Activated naive CD4-positive, alpha-beta T cell treated with anti-CD3 and anti-CD28 coated beads for 36 hours (primary cell): ENCODE measurements at regions of chr6 and their contacts with region 1.

Region 1: DNA sequence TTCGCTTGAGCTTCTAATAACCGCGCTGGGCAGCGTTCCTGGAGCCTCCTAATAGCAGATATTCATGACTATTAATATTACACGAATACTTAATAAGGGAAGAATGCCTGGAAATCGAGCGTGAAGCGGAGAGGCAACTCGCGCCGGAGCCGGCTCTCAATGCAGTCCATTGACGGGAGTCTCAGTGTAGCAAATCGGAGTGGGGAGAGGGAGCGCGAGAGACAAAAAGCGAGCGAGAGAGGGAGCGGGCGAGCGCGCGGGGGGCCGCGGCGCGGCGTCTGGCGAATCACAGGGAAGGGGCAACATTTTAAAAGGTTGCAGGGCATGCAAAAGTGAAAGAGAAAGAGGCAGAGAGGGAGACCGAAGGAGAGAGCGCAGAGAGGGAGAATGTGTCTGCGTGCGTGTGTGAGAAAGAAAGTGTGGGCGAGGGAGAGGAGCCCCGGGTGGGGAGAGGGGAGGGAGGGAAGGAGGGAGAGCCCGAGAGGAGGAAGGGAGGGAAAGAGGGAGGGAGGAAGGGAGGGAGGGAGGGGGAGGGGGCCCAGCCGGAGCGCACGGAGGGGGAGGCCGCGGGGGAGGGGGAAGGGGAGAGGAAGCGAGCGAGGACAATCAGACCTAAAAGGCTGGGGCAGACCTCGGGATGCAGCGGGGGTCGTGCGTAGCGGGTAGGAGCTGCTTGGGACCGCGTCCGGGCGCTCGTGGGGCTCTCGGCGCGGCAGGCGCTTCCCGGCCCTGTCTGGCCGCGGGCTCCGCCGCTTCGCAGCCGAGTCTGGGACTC is 2.7 kb downstream of the TFAP2A start:
- DNase-seq: peak; percentile 51
- H3K4me3 Mint-ChIP-seq: peak overlapping the region; percentile 83
- H3K27ac Mint-ChIP-seq: no peak overlapping the region
- H3K4me1 Mint-ChIP-seq: peaks cover 45% of the 10 kb centered on the region
- H3K27me3 Mint-ChIP-seq: peaks cover 85% of the 10 kb centered on the region

Region 2: DNA sequence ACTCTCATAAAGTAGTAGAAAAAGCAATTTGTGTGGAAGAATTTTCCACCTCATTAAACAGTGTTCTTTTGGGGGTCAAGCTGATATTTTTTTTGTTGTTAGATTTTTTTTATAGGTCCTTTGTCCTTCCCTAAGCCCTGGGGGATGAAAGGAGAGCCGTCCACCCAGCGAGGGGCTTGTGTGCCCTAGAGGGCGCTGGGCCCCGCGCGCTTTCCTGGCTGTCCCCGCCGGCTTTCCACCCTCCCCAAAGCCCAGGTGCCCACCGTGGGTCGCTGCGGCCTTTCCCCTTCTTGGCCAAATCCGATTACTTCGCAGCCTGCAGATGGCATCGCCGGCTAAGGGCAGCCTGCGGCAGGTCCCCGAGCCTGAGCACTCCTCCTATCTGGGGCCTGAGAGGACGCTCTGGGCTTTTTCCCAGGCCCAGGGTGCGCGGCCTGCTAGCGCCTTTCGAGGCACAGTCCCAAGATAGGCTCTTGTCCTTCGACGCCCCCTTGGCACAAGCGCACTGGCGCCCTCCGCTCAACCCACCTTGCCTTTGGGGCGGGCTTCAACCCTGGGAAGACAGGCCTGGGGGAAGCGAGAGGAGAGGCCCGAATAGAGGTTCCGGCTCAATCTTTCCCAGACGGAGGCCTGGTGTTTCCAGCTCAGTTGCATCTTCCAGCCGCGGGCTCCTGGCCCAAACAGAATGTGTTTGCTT is 30.9 kb before region 1 on chr6:
- CTCF ChIA-PET with region 1: interaction called, 4 read pairs
- intact Hi-C with region 1: loop called (anchors 2 kb)
- DNase-seq: peak; percentile 32
- H3K4me3 Mint-ChIP-seq: no peak overlapping the region
- H3K27ac Mint-ChIP-seq: no peak overlapping the region
- H3K4me1 Mint-ChIP-seq: peaks cover 18% of the 10 kb centered on the region
- H3K27me3 Mint-ChIP-seq: peaks cover 68% of the 10 kb centered on the region

Region 3: GRCh38 chr6:10424007-10424406 is 11.8 kb after region 1 on chr6:
- CTCF ChIA-PET with region 1: interaction called, 9 read pairs
- intact Hi-C with region 1: loop called (anchors 1 kb)
- DNase-seq: no peak
- H3K4me3 Mint-ChIP-seq: no peak overlapping the region
- H3K27ac Mint-ChIP-seq: no peak overlapping the region
- H3K4me1 Mint-ChIP-seq: peaks cover 15% of the 10 kb centered on the region
- H3K27me3 Mint-ChIP-seq: peaks cover 83% of the 10 kb centered on the region

Region 4: DNA sequence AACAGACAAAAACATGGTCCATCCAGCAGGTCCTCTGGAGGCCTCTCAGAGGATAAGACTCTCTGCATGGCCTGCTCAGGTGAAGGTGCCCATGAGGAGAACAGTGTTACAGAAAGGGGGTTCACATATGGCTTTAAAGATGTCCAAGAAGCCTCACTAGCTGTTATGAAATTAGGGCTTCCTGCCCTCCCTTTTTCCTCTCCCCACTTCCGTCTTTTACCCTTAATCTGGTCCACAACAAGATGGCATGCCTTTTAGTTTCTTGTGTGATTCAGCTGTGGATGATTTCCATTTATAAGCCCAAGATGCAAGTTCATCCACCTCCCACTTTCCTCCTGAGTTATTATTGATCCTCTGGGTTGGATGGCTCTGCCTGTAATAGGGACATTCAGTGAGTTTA is 123.0 kb after region 1 on chr6:
- CTCF ChIA-PET with region 1: no interaction called
- intact Hi-C with region 1: no loop called
- DNase-seq: no peak
- H3K4me3 Mint-ChIP-seq: no peak overlapping the region
- H3K27ac Mint-ChIP-seq: no peak overlapping the region
- H3K4me1 Mint-ChIP-seq: peaks cover 27% of the 10 kb centered on the region
- H3K27me3 Mint-ChIP-seq: no peaks in the 10 kb centered on the region

Region 5: GRCh38 chr6:11251541-11252360 is 839.6 kb after region 1 on chr6:
- CTCF ChIA-PET with region 1: no interaction called
- intact Hi-C with region 1: no loop called
- DNase-seq: no peak
- H3K4me3 Mint-ChIP-seq: no peak overlapping the region
- H3K27ac Mint-ChIP-seq: no peak overlapping the region
- H3K4me1 Mint-ChIP-seq: no peaks in the 10 kb centered on the region
- H3K27me3 Mint-ChIP-seq: no peaks in the 10 kb centered on the region